ENCODE measurements at regions of chr1 and their contacts with region 1.

Region 1: GRCh38 chr1:84319662-84320061 is 18.2 kb downstream of the SAMD13 start:
- DNase-seq: no peak
- H3K4me3 ChIP-seq: no peak overlapping the region
- H3K27ac ChIP-seq: no peak overlapping the region
- H3K4me1 ChIP-seq: no peaks in the 10 kb centered on the region
- H3K27me3 ChIP-seq: no peaks in the 10 kb centered on the region
- CTCF ChIP-seq: no peak
- POLR2A ChIP-seq: no peak

Region 2: GRCh38 chr1:85448358-85448757 is 1128.7 kb after region 1 on chr1:
- intact Hi-C with region 1: loop called (anchors 10 kb)
- DNase-seq: no peak
- H3K4me3 ChIP-seq: no peak overlapping the region
- H3K27ac ChIP-seq: peak overlapping the region in 1 of 2 donors; percentile 54
- H3K4me1 ChIP-seq: no peaks in the 10 kb centered on the region
- H3K27me3 ChIP-seq: no peaks in the 10 kb centered on the region
- CTCF ChIP-seq: no peak
- POLR2A ChIP-seq: no peak